ENCODE measurements at regions of chr12 and their contacts with region 1.

Region 1: GRCh38 chr12:68686595-68687521 is at the start of gene NUP107:
- DNase-seq: peak; percentile 98 to 100 (median 99)
- H3K4me3 ChIP-seq: peak within 1 kb of the TSS; percentile 44 to 89 (median 77)
- H3K27ac ChIP-seq: peak within 1 kb of the TSS in 4 of 5 donors; percentile 71 to 79 (median 74)
- H3K4me1 ChIP-seq: peaks cover 5 to 8% of the 10 kb centered on the region in 2 donors
- H3K27me3 ChIP-seq: no peaks in the 10 kb centered on the region
- CTCF ChIP-seq: peak in 4 of 6 experiments; percentile 18 to 42 (median 28)
- POLR2A ChIP-seq: peak; percentile 18 to 70
- total RNA-seq, gene NUP107: 18.0 to 51.6 (median 31.7) TPM

Region 2: DNA sequence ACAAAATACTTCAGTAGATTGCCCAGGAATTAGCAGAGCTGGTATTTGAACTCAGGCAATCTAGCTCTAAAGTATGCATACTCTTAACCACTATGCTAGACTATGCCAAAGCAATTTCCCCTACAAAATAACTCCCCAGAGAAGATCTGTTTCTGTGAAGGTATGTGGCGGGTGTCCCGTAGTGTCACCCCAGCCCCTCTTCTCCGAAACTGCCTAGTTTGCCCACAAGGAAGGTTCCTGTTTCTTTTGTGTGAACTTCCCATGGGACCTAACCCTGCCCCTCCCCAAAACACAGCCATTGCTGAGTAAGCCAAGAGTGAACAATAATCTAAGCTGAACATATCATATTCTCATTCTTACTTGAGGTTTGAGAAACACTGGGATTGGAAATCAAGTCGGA is 91.6 kb before region 1 on chr12:
- intact Hi-C with region 1: no loop called
- DNase-seq: no peak
- H3K4me3 ChIP-seq: no peak overlapping the region
- H3K27ac ChIP-seq: no peak overlapping the region
- H3K4me1 ChIP-seq: no peaks in the 10 kb centered on the region
- H3K27me3 ChIP-seq: no peaks in the 10 kb centered on the region
- CTCF ChIP-seq: no peak
- POLR2A ChIP-seq: no peak

Region 3: GRCh38 chr12:68610370-68611093 is 76.3 kb before region 1 on chr12 and contains the start of gene RAP1B:
- intact Hi-C with region 1: loop called in 1 of 2 experiments (anchors 10 kb)
- DNase-seq: peak; percentile 89 to 95 (median 91)
- H3K4me3 ChIP-seq: peak within 1 kb of the TSS; percentile 55 to 88 (median 61)
- H3K27ac ChIP-seq: peak within 1 kb of the TSS; percentile 93 to 99 (median 96)
- H3K4me1 ChIP-seq: peaks cover 26 to 37% of the 10 kb centered on the region in 2 donors
- H3K27me3 ChIP-seq: no peaks in the 10 kb centered on the region
- CTCF ChIP-seq: no peak
- POLR2A ChIP-seq: peak; percentile 85 to 98
- total RNA-seq, gene RAP1B: 113 to 302 (median 167) TPM

Region 4: DNA sequence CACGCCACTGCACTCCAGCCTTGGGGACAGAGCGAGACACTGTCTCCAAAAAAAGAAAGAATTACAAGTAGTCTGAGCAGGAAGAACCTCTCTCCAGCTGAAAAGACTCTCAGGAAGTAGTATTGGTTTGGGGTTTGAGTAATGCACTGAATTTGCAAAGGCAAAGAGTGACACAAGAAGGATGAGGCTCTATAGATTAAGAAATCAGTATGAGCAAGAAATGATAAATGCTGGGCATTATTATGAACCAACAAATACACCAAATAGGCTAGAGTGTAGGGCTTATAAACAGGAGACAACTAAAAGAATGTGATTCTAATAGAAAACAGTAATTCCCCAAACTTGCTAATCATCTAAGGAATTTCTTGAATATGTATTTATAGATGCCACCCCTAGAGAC is 56.5 kb after region 1 on chr12:
- intact Hi-C with region 1: no loop called
- DNase-seq: no peak
- H3K4me3 ChIP-seq: no peak overlapping the region
- H3K27ac ChIP-seq: no peak overlapping the region
- H3K4me1 ChIP-seq: peaks cover 9 to 16% of the 10 kb centered on the region in 2 donors
- H3K27me3 ChIP-seq: no peaks in the 10 kb centered on the region
- CTCF ChIP-seq: no peak
- POLR2A ChIP-seq: no peak

Region 5: GRCh38 chr12:69101505-69101904 is 414.6 kb after region 1 on chr12:
- intact Hi-C with region 1: no loop called
- DNase-seq: peak in 6 of 7 donors; percentile 24 to 66 (median 28)
- H3K4me3 ChIP-seq: no peak overlapping the region
- H3K27ac ChIP-seq: peak overlapping the region in 1 of 5 donors; percentile 23
- H3K4me1 ChIP-seq: peaks cover 0 to 13% of the 10 kb centered on the region in 2 donors
- H3K27me3 ChIP-seq: no peaks in the 10 kb centered on the region
- CTCF ChIP-seq: no peak
- POLR2A ChIP-seq: no peak